CD4-positive, alpha-beta memory T cell (primary cell): ENCODE measurements at regions of chr12 and their contacts with region 1.

Region 1: GRCh38 chr12:9049520-9050133 is 60.3 kb downstream of the KLRG1 start:
- DNase-seq: peak; percentile 39 to 66 (median 60)
- H3K4me3 ChIP-seq: no peak overlapping the region
- H3K4me3 Mint-ChIP-seq: peak overlapping the region in 2 of 8 donors; percentile 26 to 55
- H3K27ac ChIP-seq: no peak overlapping the region
- H3K27ac Mint-ChIP-seq: peak overlapping the region; percentile 26 to 90 (median 51)
- H3K4me1 ChIP-seq: peaks cover 25% of the 10 kb centered on the region
- H3K4me1 Mint-ChIP-seq: peaks cover 20 to 46% (median 35%) of the 10 kb centered on the region in 4 donors
- H3K27me3 ChIP-seq: no peaks in the 10 kb centered on the region
- H3K27me3 Mint-ChIP-seq: no peaks in the 10 kb centered on the region

Region 2: GRCh38 chr12:8662593-8662992 is 387.0 kb before region 1 on chr12 and contains the start of gene MFAP5:
- CTCF ChIA-PET with region 1: interaction called, 30 read pairs
- POLR2A ChIA-PET with region 1: interaction called, 5 read pairs
- intact Hi-C with region 1: loop called (anchors 1 kb)
- DNase-seq: no peak
- H3K4me3 ChIP-seq: no peak within 1 kb of the TSS
- H3K4me3 Mint-ChIP-seq: no peak within 1 kb of the TSS
- H3K27ac ChIP-seq: no peak within 1 kb of the TSS
- H3K27ac Mint-ChIP-seq: no peak within 1 kb of the TSS
- H3K4me1 ChIP-seq: no peaks in the 10 kb centered on the region
- H3K4me1 Mint-ChIP-seq: no peaks in the 10 kb centered on the region
- H3K27me3 ChIP-seq: no peaks in the 10 kb centered on the region
- H3K27me3 Mint-ChIP-seq: peaks cover 5% of the 10 kb centered on the region in 2 donors
- total RNA-seq, gene MFAP5: not detected

Region 3: GRCh38 chr12:8687846-8688601 is 361.6 kb before region 1 on chr12:
- CTCF ChIA-PET with region 1: interaction called, 101 read pairs
- POLR2A ChIA-PET with region 1: no interaction called
- intact Hi-C with region 1: no loop called
- DNase-seq: peak in 1 of 5 donors; percentile 1
- H3K4me3 ChIP-seq: no peak overlapping the region
- H3K4me3 Mint-ChIP-seq: no peak overlapping the region
- H3K27ac ChIP-seq: no peak overlapping the region
- H3K27ac Mint-ChIP-seq: no peak overlapping the region
- H3K4me1 ChIP-seq: peaks cover 7% of the 10 kb centered on the region
- H3K4me1 Mint-ChIP-seq: peaks cover 0 to 7% (median 2%) of the 10 kb centered on the region in 4 donors
- H3K27me3 ChIP-seq: no peaks in the 10 kb centered on the region
- H3K27me3 Mint-ChIP-seq: peaks cover 0 to 1% of the 10 kb centered on the region in 2 donors

Region 4: GRCh38 chr12:8914716-8915526 is 134.7 kb before region 1 on chr12:
- CTCF ChIA-PET with region 1: interaction called, 17 read pairs
- POLR2A ChIA-PET with region 1: interaction called, 7 read pairs
- intact Hi-C with region 1: no loop called
- DNase-seq: peak; percentile 65 to 80 (median 70)
- H3K4me3 ChIP-seq: peak overlapping the region; percentile 81 to 92
- H3K4me3 Mint-ChIP-seq: no peak overlapping the region
- H3K27ac ChIP-seq: peak overlapping the region; percentile 63
- H3K27ac Mint-ChIP-seq: no peak overlapping the region
- H3K4me1 ChIP-seq: peaks cover 36% of the 10 kb centered on the region
- H3K4me1 Mint-ChIP-seq: peaks cover 10 to 17% (median 14%) of the 10 kb centered on the region in 4 donors
- H3K27me3 ChIP-seq: no peaks in the 10 kb centered on the region
- H3K27me3 Mint-ChIP-seq: no peaks in the 10 kb centered on the region

Region 5: DNA sequence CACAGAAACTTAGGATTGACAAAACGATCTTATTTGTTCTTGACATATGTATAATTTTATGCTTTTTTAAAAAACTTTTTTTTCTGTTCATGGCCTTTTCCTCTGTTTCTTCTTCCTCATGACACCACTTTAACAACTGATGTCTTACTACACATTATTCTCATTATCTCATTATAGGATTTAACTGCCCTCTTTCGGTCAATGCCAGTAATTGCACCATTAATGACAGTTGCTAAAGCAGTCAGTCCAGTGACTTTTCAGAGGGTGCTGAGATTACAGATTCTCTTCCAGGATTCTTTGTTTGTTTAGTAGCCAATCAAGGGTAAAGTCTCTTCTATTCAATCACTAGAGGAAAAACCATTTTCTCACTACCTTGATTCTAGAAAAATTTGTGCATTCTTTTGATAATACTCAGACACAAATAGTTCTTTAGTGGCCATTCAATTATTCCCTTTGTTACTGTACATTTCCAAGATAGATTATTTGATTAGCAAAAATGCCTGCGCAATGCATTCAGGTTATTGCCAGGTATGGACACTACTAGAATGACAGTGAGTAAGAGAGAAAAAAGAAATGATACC is 10.1 kb before region 1 on chr12:
- CTCF ChIA-PET with region 1: interaction called, 48 read pairs
- POLR2A ChIA-PET with region 1: interaction called, 8 read pairs
- intact Hi-C with region 1: loop called (anchors 1 kb)
- DNase-seq: peak in 4 of 5 donors; percentile 67 to 75 (median 70)
- H3K4me3 ChIP-seq: no peak overlapping the region
- H3K4me3 Mint-ChIP-seq: peak overlapping the region in 6 of 8 donors; percentile 5 to 57 (median 50)
- H3K27ac ChIP-seq: peak overlapping the region; percentile 2
- H3K27ac Mint-ChIP-seq: peak overlapping the region; percentile 38 to 82 (median 66)
- H3K4me1 ChIP-seq: peaks cover 68% of the 10 kb centered on the region
- H3K4me1 Mint-ChIP-seq: peaks cover 45 to 84% (median 64%) of the 10 kb centered on the region in 4 donors
- H3K27me3 ChIP-seq: no peaks in the 10 kb centered on the region
- H3K27me3 Mint-ChIP-seq: no peaks in the 10 kb centered on the region